ENCODE measurements at regions of chr9 and their contacts with region 1.

Region 1: GRCh38 chr9:4740638-4741364 is at the start of gene AK3:
- DNase-seq: peak; percentile 82
- ATAC-seq: peak; percentile 95
- H3K4me3 ChIP-seq: peak within 1 kb of the TSS; percentile 94
- H3K27ac ChIP-seq: peak within 1 kb of the TSS; percentile 96
- H3K4me1 ChIP-seq: peaks cover 7% of the 10 kb centered on the region; the same call in 1 of the 2 replicates
- H3K27me3 ChIP-seq: no peaks in the 10 kb centered on the region
- CTCF ChIP-seq: peak; percentile 46
- POLR2A ChIP-seq: peak; percentile 78
- RAD21 ChIP-seq: peak; percentile 46
- total RNA-seq, gene AK3: 24.7 and 33.3 TPM in 2 replicates

Region 2: DNA sequence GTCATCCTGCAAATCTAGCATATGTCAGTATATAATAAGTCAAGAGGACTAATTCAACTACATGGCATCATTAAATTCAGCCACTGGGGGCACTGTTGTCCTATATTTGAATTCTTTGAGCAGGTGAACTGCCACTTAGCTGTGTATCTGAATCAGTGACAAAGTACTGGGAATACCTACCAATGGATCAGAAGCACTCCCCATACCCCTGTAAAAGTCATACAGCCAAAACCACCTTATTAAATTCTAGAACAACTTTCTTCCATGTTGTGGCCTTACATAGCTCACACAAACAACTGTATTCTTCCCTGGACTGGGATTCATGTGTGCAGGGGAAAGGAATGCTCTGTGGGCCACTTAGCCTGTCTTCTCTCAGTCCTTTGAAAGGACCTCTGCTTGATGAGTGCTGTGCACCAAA is 136.1 kb before region 1 on chr9:
- CTCF ChIA-PET with region 1: no interaction called
- POLR2A ChIA-PET with region 1: no interaction called
- dilution Hi-C with region 1: no loop called
- in situ Hi-C with region 1: no loop called
- intact Hi-C with region 1: loop called (anchors 5 kb)
- DNase-seq: peak; percentile 59
- ATAC-seq: peak; percentile 82
- H3K4me3 ChIP-seq: no peak overlapping the region
- H3K27ac ChIP-seq: no peak overlapping the region
- H3K4me1 ChIP-seq: no peaks in the 10 kb centered on the region
- H3K27me3 ChIP-seq: no peaks in the 10 kb centered on the region; the same call in 1 of the 2 replicates
- CTCF ChIP-seq: peak; percentile 71
- POLR2A ChIP-seq: no peak
- RAD21 ChIP-seq: peak; percentile 69

Region 3: GRCh38 chr9:4774209-4774608 is 33.4 kb after region 1 on chr9:
- CTCF ChIA-PET with region 1: no interaction called
- POLR2A ChIA-PET with region 1: no interaction called
- dilution Hi-C with region 1: no loop called
- in situ Hi-C with region 1: no loop called
- intact Hi-C with region 1: no loop called
- DNase-seq: no peak
- ATAC-seq: no peak
- H3K4me3 ChIP-seq: no peak overlapping the region
- H3K27ac ChIP-seq: no peak overlapping the region
- H3K4me1 ChIP-seq: no peaks in the 10 kb centered on the region
- H3K27me3 ChIP-seq: peaks cover 4% of the 10 kb centered on the region
- CTCF ChIP-seq: no peak
- POLR2A ChIP-seq: no peak
- RAD21 ChIP-seq: no peak